Heart right ventricle (tissue), 16 donors: ENCODE measurements at regions of chr7 and their contacts with region 1.

Region 1: GRCh38 chr7:129433847-129434674 is at the start of gene STRIP2:
- DNase-seq: peak; percentile 93 to 94
- ATAC-seq: peak; percentile 98 to 100 (median 99)
- H3K4me3 ChIP-seq: peak within 1 kb of the TSS; percentile 45 to 92 (median 86)
- H3K27ac ChIP-seq: peak within 1 kb of the TSS in 9 of 10 donors; percentile 63 to 86 (median 78)
- H3K4me1 ChIP-seq: peaks cover 0 to 28% (median 8%) of the 10 kb centered on the region in 9 donors
- H3K27me3 ChIP-seq: peaks cover 0 to 35% (median 0%) of the 10 kb centered on the region in 7 donors
- CTCF ChIP-seq: peak in 4 of 9 donors; percentile 17 to 34 (median 30)
- total RNA-seq, gene STRIP2: 14.6 to 36.9 (median 22.2) TPM

Region 2: DNA sequence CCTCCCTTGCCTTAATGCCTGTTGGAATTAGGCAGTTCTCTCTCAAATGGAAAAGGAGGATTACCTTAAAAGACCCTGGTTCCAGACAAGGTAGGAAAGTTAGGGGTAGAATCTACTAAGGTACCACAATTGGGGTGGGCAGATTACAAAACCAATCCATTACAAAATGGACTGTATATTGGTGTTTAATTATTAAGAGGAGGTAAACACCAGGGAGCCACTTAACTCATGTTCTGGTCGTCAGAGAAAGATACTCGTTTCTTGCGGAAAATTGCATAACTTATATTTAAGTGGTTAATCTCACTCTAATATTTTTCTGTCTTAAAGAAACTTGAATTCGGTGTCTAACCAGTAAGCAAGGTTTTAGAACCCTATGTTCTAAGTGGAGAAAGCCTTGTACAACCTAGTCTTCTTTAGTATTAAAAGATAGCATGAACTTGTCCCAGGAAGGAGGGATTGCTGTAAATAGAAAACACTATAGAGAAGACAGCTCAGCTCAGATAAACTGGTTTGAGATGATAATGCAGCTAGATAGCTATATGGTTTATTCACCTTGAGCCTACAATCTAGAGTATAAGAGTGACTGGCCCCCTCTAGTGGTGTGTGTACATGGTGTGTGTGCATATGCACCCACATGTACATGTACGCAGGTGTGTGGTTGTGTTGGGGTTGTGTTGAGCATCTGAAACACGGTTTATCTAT is 57.8 kb before region 1 on chr7:
- intact Hi-C with region 1: loop called in 1 of 10 experiments (anchors 10 kb)
- DNase-seq: peak in 1 of 2 donors; percentile 10
- ATAC-seq: peak in 1 of 8 donors; percentile 59
- H3K4me3 ChIP-seq: no peak overlapping the region
- H3K27ac ChIP-seq: no peak overlapping the region
- H3K4me1 ChIP-seq: peaks cover 0 to 15% (median 0%) of the 10 kb centered on the region in 9 donors
- H3K27me3 ChIP-seq: no peaks in the 10 kb centered on the region
- CTCF ChIP-seq: peak; percentile 11 to 64 (median 50)